ENCODE measurements at regions of chr9 and their contacts with region 1.

Region 1: DNA sequence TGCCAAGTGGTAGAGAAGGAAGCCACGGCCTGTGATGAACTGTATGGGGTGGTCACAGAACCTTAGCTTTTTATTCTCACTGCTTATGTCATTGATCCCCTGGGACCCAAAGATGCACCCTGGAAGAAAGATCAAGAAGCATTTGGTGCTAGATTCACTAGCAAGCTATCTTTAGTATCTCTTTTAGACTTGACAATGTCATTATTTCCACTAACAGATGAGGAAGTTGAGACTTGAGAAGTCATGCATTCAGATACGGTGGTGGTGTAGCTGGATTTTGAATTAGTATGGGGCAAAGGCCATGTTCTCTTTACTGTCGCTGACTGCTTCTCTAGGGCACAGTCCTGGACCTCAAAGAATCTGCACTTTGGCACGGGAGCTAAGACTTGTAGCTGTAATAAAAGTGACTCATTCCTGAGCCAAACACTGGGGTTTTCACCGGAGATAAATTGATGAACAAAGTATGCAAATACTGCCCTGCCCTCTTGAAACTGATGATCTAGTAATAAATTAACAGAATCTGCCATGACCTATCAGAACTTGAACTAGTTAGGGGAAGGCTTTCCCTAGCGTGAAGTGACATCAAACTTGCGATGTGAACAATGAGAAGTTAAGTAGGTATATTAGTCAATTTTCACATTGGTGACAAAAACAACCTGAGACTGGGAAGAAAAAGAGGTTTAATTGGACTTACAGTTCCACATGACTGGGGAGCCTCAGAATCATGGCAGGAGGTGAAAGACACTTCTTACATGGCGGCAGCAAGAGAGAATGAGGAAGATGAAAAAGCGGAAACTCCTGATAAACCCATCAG is 5.4 kb downstream of the GDA start:
- DNase-seq: no peak
- ATAC-seq: no peak
- H3K4me3 ChIP-seq: no peak overlapping the region
- H3K27ac ChIP-seq: no peak overlapping the region
- H3K4me1 ChIP-seq: no peaks in the 10 kb centered on the region
- H3K27me3 ChIP-seq: no peaks in the 10 kb centered on the region
- CTCF ChIP-seq: no peak
- POLR2A ChIP-seq: no peak

Region 2: GRCh38 chr9:72065076-72065475 is 89.6 kb before region 1 on chr9:
- in situ Hi-C with region 1: loop called in 1 of 4 experiments (anchors 25 kb)
- intact Hi-C with region 1: no loop called
- DNase-seq: no peak
- ATAC-seq: no peak
- H3K4me3 ChIP-seq: no peak overlapping the region
- H3K27ac ChIP-seq: no peak overlapping the region
- H3K4me1 ChIP-seq: no peaks in the 10 kb centered on the region
- H3K27me3 ChIP-seq: no peaks in the 10 kb centered on the region
- CTCF ChIP-seq: no peak
- POLR2A ChIP-seq: no peak